IMR-90 (cell line): ENCODE measurements at regions of chr1 and their contacts with region 1.

Region 1: DNA sequence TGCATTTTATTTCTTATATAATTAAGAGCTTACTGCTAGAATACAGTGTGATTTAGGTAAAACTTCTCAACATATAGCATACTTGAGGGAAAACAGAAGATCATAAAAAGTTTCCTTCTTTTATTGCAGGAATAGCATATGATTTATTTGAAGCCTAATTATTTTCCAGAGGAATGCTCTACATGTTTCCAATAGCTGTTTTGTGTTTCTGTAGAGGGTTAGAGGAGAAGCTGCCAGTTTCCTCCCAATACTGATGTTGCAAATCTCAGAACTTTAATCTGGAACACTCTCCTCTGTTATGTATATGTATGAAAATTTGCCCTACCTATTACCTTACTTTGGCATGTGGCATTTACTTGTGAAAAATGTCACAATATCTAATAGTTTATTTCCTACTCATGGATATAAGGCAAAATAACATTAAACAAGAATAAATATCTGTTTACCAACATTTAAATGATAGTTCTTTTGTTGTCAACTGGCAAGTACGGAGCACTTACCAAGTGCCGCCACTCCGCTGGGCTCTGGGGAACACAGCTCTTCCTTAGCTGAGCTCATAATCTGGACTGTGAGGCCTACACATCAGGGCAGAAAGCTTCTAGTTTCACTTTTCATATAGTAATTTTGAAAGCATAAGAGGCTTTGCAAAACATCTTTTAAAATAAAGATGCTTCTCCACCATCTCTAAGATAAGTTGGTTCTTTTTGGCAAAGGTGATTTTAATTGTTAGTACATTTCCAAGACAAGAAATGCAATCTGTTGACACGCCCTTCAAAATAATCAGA is 239.8 kb upstream of the C1orf105 start:
- DNase-seq: peak; percentile 70
- ATAC-seq: peak; percentile 67
- H3K4me3 ChIP-seq: peak overlapping the region; percentile 52; the same call in 1 of the 2 replicates
- H3K27ac ChIP-seq: peak overlapping the region; percentile 99
- H3K4me1 ChIP-seq: peaks cover 12% of the 10 kb centered on the region
- H3K27me3 ChIP-seq: no peaks in the 10 kb centered on the region
- CTCF ChIP-seq: no peak
- POLR2A ChIP-seq: no peak
- RAD21 ChIP-seq: no peak

Region 2: GRCh38 chr1:172163498-172164215 is 17.0 kb before region 1 on chr1:
- CTCF ChIA-PET with region 1: interaction called, 5 read pairs
- POLR2A ChIA-PET with region 1: no interaction called
- dilution Hi-C with region 1: no loop called
- in situ Hi-C with region 1: no loop called
- intact Hi-C with region 1: loop called (anchors 2 kb)
- DNase-seq: peak; percentile 52
- ATAC-seq: peak; percentile 76
- H3K4me3 ChIP-seq: no peak overlapping the region
- H3K27ac ChIP-seq: no peak overlapping the region
- H3K4me1 ChIP-seq: 0 out of 2 replicates have a peak, but pooled peaks cover 2% of the 10 kb centered on the region
- H3K27me3 ChIP-seq: no peaks in the 10 kb centered on the region
- CTCF ChIP-seq: no peak
- POLR2A ChIP-seq: no peak
- RAD21 ChIP-seq: no peak